ENCODE measurements at regions of chr16 and their contacts with region 1.

Region 1: DNA sequence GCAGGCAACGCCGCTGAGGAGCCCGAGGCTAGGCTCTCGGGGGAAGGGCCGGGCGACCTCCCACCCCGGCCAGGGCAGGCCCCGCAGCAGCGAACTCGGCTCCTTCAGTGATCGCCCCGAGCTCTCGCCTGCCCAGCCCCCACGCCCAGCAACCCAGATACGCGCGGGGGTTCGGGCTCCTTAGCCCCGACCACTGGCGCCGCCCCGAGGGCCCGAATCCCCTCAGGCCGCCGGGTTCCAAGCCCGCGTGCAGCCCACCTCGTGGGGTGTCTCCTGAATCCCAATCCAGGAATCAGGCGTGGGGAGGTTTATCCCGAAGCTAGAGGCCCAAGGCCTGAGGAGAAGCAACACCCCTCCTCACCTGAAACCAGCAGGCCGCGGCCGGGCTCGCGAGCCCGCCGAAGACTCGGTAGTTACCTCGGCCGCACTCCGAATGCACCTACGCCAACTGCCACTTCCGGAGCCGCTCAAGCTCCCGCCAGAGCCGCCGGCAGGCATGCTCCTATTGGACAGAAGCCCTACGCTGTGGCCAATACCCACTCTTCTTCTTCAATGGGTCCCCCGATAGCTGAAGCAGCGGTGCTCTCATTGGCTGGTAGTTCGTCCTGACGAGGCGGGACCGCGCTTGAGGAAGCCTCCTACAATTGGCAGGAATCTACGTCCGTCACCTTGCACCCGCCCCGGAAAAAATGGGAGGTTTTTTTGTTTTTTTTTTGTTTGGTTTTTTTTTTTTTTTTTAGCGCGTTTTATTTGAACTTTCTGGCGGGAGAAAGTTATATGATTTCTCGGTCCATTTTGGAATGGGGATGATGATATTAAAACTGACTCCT is at the start of gene RFWD3:
- DNase-seq: peak; percentile 99
- ATAC-seq: peak; percentile 100
- H3K4me3 ChIP-seq: peak within 1 kb of the TSS; percentile 81 to 98 (median 90)
- H3K27ac ChIP-seq: peak within 1 kb of the TSS; percentile 90
- H3K4me1 ChIP-seq: peaks cover 52% of the 10 kb centered on the region
- H3K27me3 ChIP-seq: no peaks in the 10 kb centered on the region
- CTCF ChIP-seq: peak; percentile 21; the same call in 1 of the 2 replicates
- EP300 ChIP-seq: no peak; a peak in 1 of 4 replicates
- POLR2A ChIP-seq: peak; percentile 86 to 98
- RAD21 ChIP-seq: peak; percentile 46; the same call in 1 of the 2 replicates
- total RNA-seq, gene RFWD3: 62.6 and 87.6 TPM in 2 replicates

Region 2: GRCh38 chr16:74679983-74680382 is 13.3 kb after region 1 on chr16:
- CTCF ChIA-PET with region 1: no interaction called
- POLR2A ChIA-PET with region 1: interaction called, 11 read pairs
- in situ Hi-C with region 1: no loop called
- intact Hi-C with region 1: no loop called
- DNase-seq: peak; percentile 28
- ATAC-seq: peak; percentile 74
- H3K4me3 ChIP-seq: no peak overlapping the region
- H3K27ac ChIP-seq: peak overlapping the region; percentile 57
- H3K4me1 ChIP-seq: peaks cover 14% of the 10 kb centered on the region
- H3K27me3 ChIP-seq: no peaks in the 10 kb centered on the region
- CTCF ChIP-seq: no peak
- EP300 ChIP-seq: no peak; a peak in 1 of 4 replicates
- POLR2A ChIP-seq: no peak
- RAD21 ChIP-seq: no peak

Region 3: DNA sequence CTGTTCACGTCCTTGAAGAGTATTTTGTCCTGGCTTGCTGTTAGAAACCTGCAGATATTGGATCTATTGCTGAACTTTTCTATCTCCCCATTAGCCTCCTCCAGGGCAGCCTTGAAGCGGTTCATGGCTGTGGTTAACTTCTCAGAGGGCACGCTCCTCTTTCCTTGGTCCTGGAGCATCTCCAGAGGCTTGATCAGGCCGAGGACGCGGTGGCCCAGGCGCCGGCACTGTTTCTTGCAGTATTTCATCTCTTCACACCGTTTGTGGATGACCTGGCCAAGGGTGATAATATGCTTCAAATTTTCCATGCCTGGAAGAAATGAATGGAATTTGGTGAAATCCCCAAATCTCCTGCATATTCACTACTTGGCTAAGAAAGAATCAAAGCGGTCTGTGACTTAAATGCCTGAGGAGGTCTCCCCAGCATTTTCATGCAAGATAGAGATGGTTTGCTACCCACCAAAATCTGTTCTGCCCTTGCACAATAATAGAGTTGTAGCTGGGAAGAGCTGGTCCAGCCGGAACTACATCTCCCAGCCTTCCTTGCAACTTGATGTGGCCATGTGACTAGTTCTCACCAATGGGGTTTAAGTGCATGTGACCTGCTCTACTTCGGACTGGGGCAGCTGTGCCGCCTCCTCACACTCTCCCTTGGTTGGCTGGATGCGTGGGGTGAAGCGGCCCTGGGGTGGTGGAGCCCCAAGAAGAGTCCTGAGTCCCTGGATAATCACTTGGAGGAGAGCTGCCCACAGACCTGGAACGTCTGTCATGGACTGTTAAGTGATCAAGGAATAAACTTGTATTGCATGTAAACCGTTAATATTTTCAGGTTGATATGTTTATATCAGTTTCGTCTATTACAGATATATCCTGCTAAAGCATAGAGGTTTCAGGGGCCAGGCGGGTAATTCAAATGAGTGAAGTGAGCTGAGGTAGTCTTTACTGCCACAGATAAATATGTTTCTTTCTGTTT is 29.1 kb after region 1 on chr16:
- CTCF ChIA-PET with region 1: no interaction called
- POLR2A ChIA-PET with region 1: interaction called, 22 read pairs
- in situ Hi-C with region 1: no loop called
- intact Hi-C with region 1: no loop called
- DNase-seq: peak; percentile 96
- ATAC-seq: peak; percentile 95
- H3K4me3 ChIP-seq: peak overlapping the region; percentile 50 to 70 (median 55)
- H3K27ac ChIP-seq: peak overlapping the region; percentile 11
- H3K4me1 ChIP-seq: peaks cover 26% of the 10 kb centered on the region
- H3K27me3 ChIP-seq: no peaks in the 10 kb centered on the region; a peak in 1 of 5 replicates
- CTCF ChIP-seq: no peak
- EP300 ChIP-seq: no peak; a peak in 1 of 4 replicates
- POLR2A ChIP-seq: peak; percentile 81 to 96
- RAD21 ChIP-seq: peak; percentile 9; the same call in 1 of the 2 replicates